Psoas muscle (tissue), 8 donors: ENCODE measurements at regions of chr17 and their contacts with region 1.

Region 1: DNA sequence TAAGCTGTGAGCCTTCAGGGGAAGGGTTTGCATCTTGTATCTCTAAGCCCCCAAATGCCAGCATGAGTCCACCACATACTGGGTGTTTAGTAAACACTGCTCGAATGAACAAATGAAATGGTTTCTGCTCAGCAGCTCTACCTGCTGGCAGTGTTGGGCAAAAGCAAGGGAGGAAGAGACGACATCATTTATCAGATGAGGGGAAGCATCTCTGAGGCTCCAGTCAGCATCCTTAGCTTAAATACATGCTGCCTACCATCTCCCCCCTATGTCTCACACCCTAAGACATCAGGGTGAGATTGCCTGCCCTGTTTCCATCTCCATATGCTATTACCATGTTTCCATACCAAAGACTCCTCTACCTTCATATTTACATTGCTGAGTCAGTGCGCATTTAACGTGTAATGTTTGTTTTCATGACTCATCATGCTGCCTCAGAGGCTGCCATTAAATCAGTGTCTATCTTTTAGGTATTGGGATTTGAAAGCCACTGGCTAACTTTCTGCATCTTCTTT is 379.8 kb downstream of the UTP18 start:
- DNase-seq: no peak
- ATAC-seq: peak in 3 of 4 donors; percentile 59 to 78 (median 77)
- H3K4me3 ChIP-seq: no peak overlapping the region
- H3K27ac ChIP-seq: no peak overlapping the region
- H3K4me1 ChIP-seq: no peaks in the 10 kb centered on the region
- H3K27me3 ChIP-seq: no peaks in the 10 kb centered on the region
- CTCF ChIP-seq: peak; percentile 48

Region 2: DNA sequence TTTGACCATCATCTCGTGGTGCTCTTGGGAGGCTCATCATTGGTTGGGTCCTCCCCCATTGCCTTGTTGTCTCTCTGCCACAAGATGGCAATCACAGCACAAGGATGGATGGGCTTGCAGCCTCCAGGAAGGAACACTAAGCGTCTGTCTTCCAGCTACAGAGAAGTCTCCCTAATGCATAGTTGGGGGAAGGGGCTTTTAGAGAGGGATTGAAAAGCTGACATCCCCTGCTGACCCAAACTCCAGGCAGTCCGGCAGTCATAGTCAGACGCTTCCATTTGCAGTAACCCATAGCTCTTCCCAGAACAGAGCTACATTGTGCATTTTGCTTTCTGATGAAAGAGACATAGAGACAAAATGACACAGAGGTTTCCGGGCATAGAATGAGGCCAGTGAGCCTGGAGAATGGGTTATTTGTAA is 268.4 kb before region 1 on chr17:
- intact Hi-C with region 1: loop called in 1 of 2 experiments (anchors 10 kb)
- DNase-seq: no peak
- ATAC-seq: peak in 1 of 4 donors; percentile 69
- H3K4me3 ChIP-seq: no peak overlapping the region
- H3K27ac ChIP-seq: no peak overlapping the region
- H3K4me1 ChIP-seq: no peaks in the 10 kb centered on the region
- H3K27me3 ChIP-seq: no peaks in the 10 kb centered on the region
- CTCF ChIP-seq: peak; percentile 39

Region 3: GRCh38 chr17:51461578-51462004 is 178.6 kb before region 1 on chr17:
- intact Hi-C with region 1: loop called in 1 of 2 experiments (anchors 10 kb)
- DNase-seq: peak; percentile 53 to 66
- ATAC-seq: peak; percentile 65 to 84 (median 76)
- H3K4me3 ChIP-seq: no peak overlapping the region
- H3K27ac ChIP-seq: no peak overlapping the region
- H3K4me1 ChIP-seq: no peaks in the 10 kb centered on the region
- H3K27me3 ChIP-seq: no peaks in the 10 kb centered on the region
- CTCF ChIP-seq: peak; percentile 64

Region 4: DNA sequence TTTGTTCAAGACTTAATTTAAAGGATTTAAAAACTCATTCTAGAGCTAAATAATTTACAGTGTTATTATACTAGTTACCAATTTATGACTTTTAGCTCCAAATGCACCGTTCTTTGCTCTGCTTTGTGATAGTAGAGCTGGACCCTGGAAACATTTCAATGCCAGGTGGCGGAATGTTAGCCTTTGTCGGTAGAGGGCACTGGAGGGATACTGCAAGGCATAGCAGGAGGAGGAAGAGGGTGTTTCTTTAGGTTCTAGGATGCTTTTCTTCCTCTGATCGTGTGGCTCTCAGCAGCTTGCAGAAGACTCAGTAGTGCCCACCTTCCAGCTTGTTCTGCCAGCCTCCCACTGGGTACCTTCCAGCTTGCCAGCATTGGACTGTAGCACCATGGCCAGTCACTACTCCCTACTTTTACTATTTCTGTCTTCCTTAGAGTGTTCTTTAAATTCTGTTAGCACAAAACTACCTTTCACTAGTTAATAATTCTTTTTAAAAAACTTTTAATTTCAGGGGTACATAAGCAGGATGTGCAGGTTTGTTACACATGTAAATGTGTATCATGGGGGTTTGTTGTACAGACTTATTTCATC is 54.6 kb before region 1 on chr17:
- intact Hi-C with region 1: loop called (anchors 5 kb)
- DNase-seq: no peak
- ATAC-seq: peak in 2 of 4 donors; percentile 69 to 73
- H3K4me3 ChIP-seq: no peak overlapping the region
- H3K27ac ChIP-seq: no peak overlapping the region
- H3K4me1 ChIP-seq: no peaks in the 10 kb centered on the region
- H3K27me3 ChIP-seq: no peaks in the 10 kb centered on the region
- CTCF ChIP-seq: peak; percentile 54